IMR-90 (cell line): ENCODE measurements at regions of chr12 and their contacts with region 1.

Region 1: GRCh38 chr12:21801522-21802288 is 27.2 kb upstream of the KCNJ8 start:
- DNase-seq: no peak
- ATAC-seq: no peak
- H3K4me3 ChIP-seq: no peak overlapping the region
- H3K27ac ChIP-seq: no peak overlapping the region
- H3K4me1 ChIP-seq: no peaks in the 10 kb centered on the region
- H3K27me3 ChIP-seq: no peaks in the 10 kb centered on the region
- CTCF ChIP-seq: no peak
- POLR2A ChIP-seq: no peak
- RAD21 ChIP-seq: no peak

Region 2: DNA sequence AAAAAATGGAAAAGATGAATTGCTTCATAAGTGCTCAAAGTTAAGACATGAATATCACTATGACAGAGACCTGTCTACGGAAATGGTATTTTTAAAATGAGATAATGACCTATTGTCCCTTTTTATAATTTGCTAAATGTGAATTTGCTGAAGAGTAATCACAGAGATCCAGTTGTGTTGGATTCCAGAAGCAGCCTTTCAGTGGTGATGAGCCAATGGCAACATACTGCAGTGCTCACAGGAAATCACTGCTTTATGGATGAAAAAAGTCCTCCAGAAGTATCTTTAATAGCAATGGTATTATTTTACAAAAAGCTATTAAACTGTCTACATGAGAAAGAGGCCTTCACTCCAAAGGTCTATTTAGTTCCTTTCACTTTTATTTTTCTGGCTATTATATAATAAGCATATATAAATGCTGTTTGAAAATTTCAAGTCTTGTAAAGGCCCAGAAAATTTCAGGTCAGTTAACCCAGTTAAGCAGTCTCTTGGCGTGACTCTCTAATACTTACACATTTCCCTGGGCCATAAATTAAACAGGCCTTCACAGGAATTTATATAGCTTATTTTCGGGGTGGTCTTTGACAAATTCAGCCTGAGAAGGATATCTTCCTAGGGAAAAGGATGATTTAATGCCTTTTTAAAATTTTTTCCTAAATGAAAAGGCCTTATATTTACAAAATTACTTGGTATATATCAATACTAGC is 82.6 kb before region 1 on chr12:
- CTCF ChIA-PET with region 1: interaction called, 10 read pairs
- POLR2A ChIA-PET with region 1: no interaction called
- dilution Hi-C with region 1: no loop called
- in situ Hi-C with region 1: no loop called
- intact Hi-C with region 1: no loop called
- DNase-seq: no peak
- ATAC-seq: no peak
- H3K4me3 ChIP-seq: no peak overlapping the region
- H3K27ac ChIP-seq: no peak overlapping the region
- H3K4me1 ChIP-seq: no peaks in the 10 kb centered on the region
- H3K27me3 ChIP-seq: no peaks in the 10 kb centered on the region
- CTCF ChIP-seq: no peak
- POLR2A ChIP-seq: no peak
- RAD21 ChIP-seq: no peak

Region 3: DNA sequence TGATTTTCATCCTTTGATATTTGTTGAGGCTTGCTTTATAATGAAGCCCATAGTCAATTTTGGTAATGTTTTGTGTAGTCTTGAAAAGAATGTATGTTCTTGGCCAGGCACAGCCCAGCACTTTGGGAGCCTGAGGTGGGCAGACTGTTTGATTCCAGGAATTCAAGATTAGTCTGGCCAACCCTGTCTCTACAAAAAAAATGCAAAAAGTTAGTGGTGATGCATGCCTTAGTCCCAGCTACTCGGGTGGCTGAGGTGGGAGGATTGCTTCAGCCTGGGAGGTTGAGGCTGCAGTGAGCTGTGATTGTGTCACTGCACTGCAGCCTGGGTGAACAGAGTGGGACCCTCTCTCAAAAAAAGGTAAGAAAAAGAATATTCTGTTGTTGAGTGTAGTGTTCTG is 834.1 kb after region 1 on chr12:
- CTCF ChIA-PET with region 1: no interaction called
- POLR2A ChIA-PET with region 1: no interaction called
- dilution Hi-C with region 1: no loop called
- in situ Hi-C with region 1: no loop called
- intact Hi-C with region 1: no loop called
- DNase-seq: no peak
- ATAC-seq: peak; percentile 69; the same call in 1 of the 2 replicates
- H3K4me3 ChIP-seq: no peak overlapping the region
- H3K27ac ChIP-seq: no peak overlapping the region
- H3K4me1 ChIP-seq: 0 out of 2 replicates have a peak, but pooled peaks cover 2% of the 10 kb centered on the region
- H3K27me3 ChIP-seq: no peaks in the 10 kb centered on the region
- CTCF ChIP-seq: no peak
- POLR2A ChIP-seq: no peak
- RAD21 ChIP-seq: no peak